ENCODE measurements at regions of chr22 and their contacts with region 1.

Region 1: DNA sequence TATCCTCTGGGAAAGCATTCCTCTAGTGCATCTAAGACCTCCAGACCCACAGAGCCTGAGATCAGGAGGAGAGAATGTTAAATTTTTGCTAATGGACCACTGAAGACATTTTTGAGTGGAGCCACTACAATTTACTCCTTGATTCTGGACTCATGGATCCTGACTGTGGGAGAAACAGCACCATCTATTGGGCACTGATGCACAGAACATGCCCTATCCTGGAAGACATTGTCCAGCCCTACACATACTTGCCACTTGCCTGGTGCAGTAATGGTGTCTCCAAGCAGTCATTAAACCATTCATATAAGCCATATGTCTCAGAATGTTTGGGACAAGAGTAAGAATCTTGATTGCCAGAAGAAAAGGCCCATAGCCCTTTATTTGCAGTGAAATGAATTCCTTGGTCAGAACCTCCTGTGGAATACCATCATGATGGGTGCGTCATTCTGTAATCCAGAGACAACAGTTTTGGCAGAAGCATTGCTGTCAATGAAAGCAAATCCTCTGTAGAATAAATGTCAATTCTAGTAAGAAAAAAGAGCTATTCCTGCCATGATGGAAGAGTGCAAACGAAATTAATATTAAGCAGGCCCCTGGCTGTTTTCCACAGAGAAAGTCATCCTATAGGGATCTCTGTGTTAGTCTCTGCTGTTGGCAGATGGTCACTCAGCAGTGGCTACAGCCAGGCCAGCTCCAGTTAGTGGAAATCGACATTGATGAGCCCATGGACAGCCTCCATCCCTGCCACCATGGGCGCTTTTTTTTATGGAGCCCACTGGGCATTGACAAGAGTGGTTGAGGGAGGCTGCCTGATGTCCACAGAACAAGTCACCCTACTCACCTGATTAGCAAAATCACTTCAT is 43.5 kb downstream of the GGTLC2 start:
- DNase-seq: peak; percentile 44
- ATAC-seq: peak; percentile 78
- H3K4me3 Mint-ChIP-seq: no peak overlapping the region
- H3K27ac Mint-ChIP-seq: no peak overlapping the region
- H3K4me1 Mint-ChIP-seq: no peaks in the 10 kb centered on the region
- H3K27me3 Mint-ChIP-seq: no peaks in the 10 kb centered on the region

Region 2: DNA sequence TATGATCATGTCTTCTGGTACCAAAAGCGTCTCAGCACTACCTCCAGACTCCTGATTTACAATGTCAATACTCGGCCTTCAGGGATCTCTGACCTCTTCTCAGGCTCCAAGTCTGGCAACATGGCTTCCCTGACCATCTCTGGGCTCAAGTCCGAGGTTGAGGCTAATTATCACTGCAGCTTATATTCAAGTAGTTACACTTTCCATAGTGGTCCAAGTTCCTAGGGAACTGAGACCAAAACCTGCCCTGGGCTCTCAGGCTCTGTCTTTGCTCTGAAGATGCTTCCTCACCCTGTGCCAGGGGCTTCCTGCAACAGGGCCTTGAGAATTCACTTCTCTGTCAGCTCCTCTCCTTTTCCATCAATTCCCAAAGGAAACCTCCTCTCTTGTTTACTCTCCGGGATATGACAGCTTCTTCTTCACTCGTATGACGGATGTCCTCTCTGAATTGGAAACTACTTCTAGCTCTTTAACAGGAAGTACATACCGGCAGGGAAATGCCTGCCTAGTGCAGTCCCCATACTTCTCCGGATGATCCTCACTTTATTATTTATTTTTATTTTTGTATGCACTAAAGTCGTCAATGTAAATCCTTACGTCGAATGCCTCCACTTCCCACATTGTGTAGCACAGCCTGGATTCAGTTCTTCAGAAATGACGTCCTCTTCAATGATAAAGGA is 99.2 kb before region 1 on chr22:
- CTCF ChIA-PET with region 1: interaction called, 5 read pairs
- POLR2A ChIA-PET with region 1: no interaction called
- intact Hi-C with region 1: loop called (anchors 1 to 5 kb)
- DNase-seq: no peak
- ATAC-seq: no peak
- H3K4me3 Mint-ChIP-seq: no peak overlapping the region
- H3K27ac Mint-ChIP-seq: no peak overlapping the region
- H3K4me1 Mint-ChIP-seq: no peaks in the 10 kb centered on the region
- H3K27me3 Mint-ChIP-seq: peaks cover 10% of the 10 kb centered on the region

Region 3: GRCh38 chr22:22593964-22594656 is 93.8 kb before region 1 on chr22:
- CTCF ChIA-PET with region 1: interaction called, 3 read pairs
- POLR2A ChIA-PET with region 1: no interaction called
- intact Hi-C with region 1: loop called (anchors 1 to 5 kb)
- DNase-seq: peak; percentile 76
- ATAC-seq: peak; percentile 95
- H3K4me3 Mint-ChIP-seq: no peak overlapping the region
- H3K27ac Mint-ChIP-seq: no peak overlapping the region
- H3K4me1 Mint-ChIP-seq: peaks cover 2% of the 10 kb centered on the region
- H3K27me3 Mint-ChIP-seq: no peaks in the 10 kb centered on the region

Measured in activated CD4-positive, alpha-beta T cell treated with anti-CD3 and anti-CD28 coated beads for 36 hours (primary cell).